BJ (cell line): ENCODE measurements at regions of chr18 and their contacts with region 1.

Region 1: DNA sequence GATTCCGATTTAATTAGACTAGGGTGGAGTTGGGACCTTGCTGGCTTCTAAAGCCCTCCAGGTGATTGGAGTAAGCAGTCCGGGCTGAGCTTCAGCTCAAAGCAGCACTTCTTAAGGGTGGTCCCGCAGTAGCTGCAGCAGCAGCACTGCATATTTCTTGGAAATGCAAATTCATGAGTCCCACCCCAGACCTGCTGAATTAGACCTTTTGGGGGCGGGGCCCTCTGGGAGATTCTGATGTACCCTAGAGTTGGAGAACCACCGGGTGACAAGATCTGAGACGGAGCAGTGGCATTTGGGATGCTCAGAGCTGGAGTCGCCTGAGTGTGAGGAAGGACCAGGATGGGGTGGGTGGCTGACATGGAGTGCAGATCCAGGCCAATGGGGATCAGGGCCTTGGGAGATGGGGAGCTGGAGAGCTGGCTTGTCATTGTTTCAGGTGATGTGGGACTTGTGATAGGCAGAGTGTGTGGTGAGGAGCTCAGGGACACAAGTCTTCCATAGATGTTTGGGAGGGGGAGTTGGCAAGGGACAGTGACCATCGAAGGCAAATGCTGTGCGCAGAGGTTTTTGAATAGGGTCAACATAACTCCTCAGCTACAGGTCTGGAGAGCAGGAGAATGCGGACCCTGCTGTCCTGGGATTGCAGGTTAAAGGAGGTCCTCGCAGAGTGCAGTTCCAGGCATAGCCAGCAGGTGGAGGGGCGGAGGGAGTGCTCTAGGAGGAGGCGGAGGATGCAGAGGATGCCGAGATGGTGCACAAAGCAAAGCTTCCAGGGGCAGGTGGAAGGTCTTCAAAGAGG is 130.9 kb upstream of the RAB12 start:
- DNase-seq: no peak
- H3K4me3 ChIP-seq: no peak overlapping the region
- H3K27me3 ChIP-seq: peaks cover 9% of the 10 kb centered on the region
- CTCF ChIP-seq: peak; percentile 94

Region 2: GRCh38 chr18:7221424-7222155 is 1256.8 kb before region 1 on chr18:
- CTCF ChIA-PET with region 1: interaction called, 12 read pairs
- POLR2A ChIA-PET with region 1: no interaction called
- DNase-seq: peak; percentile 5
- H3K4me3 ChIP-seq: no peak overlapping the region
- H3K27me3 ChIP-seq: 0 out of 2 replicates have a peak, but pooled peaks cover 2% of the 10 kb centered on the region
- CTCF ChIP-seq: peak; percentile 88

Region 3: GRCh38 chr18:7272311-7273049 is 1205.9 kb before region 1 on chr18:
- CTCF ChIA-PET with region 1: interaction called, 28 read pairs
- POLR2A ChIA-PET with region 1: no interaction called
- DNase-seq: no peak
- H3K4me3 ChIP-seq: no peak overlapping the region
- H3K27me3 ChIP-seq: no peaks in the 10 kb centered on the region; the same call in 1 of the 2 replicates
- CTCF ChIP-seq: peak; percentile 53

Region 4: DNA sequence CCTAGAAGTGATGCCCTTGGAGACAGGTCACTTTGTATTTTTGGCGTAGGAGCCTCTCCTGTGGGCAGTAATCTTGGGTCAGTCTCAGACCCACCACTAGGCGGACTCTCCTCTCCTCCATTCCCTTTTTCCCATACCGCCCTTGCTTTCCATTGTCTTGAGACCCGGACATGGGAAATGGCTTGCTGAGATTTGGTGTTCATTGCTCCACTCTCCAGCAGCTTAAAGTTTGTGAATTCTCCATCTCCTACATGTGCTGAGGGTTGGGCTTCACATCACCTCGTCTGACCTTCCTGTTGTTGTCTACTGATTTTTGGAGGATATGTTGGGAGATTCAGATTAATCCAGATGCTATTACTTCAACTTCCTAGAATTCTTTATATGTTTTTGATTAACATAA is 28.4 kb before region 1 on chr18:
- CTCF ChIA-PET with region 1: interaction called, 11 read pairs
- POLR2A ChIA-PET with region 1: no interaction called
- DNase-seq: no peak
- H3K4me3 ChIP-seq: no peak overlapping the region
- H3K27me3 ChIP-seq: peaks cover 7% of the 10 kb centered on the region; the same call in 1 of the 2 replicates
- CTCF ChIP-seq: peak; percentile 60

Region 5: DNA sequence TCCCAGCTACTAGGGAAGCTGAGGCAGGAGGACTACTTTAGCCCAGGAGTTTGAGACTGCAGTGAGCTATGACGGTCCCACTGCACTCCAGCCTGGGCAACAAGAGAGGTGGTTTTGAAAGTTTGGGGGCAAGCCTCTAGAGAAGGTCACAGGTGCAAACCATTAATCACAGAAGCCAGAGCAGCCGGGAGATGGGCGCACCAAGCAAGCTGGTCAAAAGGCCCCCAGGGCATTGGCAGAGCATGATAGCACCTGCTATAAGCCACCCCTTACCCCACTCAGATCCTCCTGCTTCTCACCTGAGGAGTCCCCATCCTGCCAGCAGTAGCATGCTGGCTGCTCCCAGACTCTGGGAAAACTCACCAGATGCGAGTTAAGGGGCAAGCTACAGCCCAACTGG is 14.8 kb after region 1 on chr18:
- CTCF ChIA-PET with region 1: interaction called, 12 read pairs
- POLR2A ChIA-PET with region 1: no interaction called
- DNase-seq: no peak
- H3K4me3 ChIP-seq: no peak overlapping the region
- H3K27me3 ChIP-seq: peaks cover 13% of the 10 kb centered on the region
- CTCF ChIP-seq: no peak

Region 6: DNA sequence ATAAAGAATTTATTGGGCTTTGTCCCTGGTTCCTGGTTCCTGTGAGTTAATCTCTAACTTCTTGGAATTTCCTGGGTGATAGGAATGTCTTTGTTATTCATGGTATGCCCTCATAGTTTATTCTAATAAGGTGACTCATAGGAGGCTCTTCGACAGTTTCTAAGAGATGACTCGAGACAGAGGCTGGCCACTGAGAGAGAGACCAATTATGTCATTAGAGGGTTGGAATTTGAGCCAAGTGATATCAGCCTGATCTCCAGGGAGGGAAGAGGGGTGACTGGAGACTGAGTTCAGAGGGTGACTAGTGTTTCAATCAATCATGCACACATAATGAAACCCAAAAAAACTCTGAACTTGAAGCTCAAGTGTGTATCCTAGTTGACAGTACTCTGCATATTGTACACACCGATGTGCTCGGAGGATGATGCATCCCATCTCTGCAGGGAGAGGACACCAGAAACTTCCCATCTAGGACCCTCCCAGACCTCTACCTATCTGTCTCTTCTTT is 412.6 kb after region 1 on chr18:
- CTCF ChIA-PET with region 1: no interaction called
- POLR2A ChIA-PET with region 1: no interaction called
- DNase-seq: peak; percentile 85
- H3K4me3 ChIP-seq: no peak overlapping the region
- H3K27me3 ChIP-seq: no peaks in the 10 kb centered on the region
- CTCF ChIP-seq: no peak